ENCODE measurements at regions of chr3 and their contacts with region 1.

Region 1: GRCh38 chr3:126134219-126134975 is 46.0 kb downstream of the ALDH1L1 start:
- DNase-seq: peak; percentile 80
- ATAC-seq: peak; percentile 76
- H3K4me3 Mint-ChIP-seq: 0 out of 2 replicates have a peak overlapping the region, but pooled peaks have one; percentile 22
- H3K27ac Mint-ChIP-seq: peak overlapping the region; percentile 81; the same call in 1 of the 2 replicates
- H3K4me1 Mint-ChIP-seq: peaks cover 22% of the 10 kb centered on the region
- H3K27me3 Mint-ChIP-seq: peaks cover 22% of the 10 kb centered on the region
- CTCF ChIP-seq: peak; percentile 81

Region 2: GRCh38 chr3:125967138-125967537 is 167.3 kb before region 1 on chr3:
- CTCF ChIA-PET with region 1: interaction called, 14 read pairs
- POLR2A ChIA-PET with region 1: no interaction called
- DNase-seq: no peak
- ATAC-seq: no peak
- H3K4me3 Mint-ChIP-seq: no peak overlapping the region
- H3K27ac Mint-ChIP-seq: no peak overlapping the region
- H3K4me1 Mint-ChIP-seq: peaks cover 8% of the 10 kb centered on the region
- H3K27me3 Mint-ChIP-seq: peaks cover 30% of the 10 kb centered on the region
- CTCF ChIP-seq: no peak

Region 3: DNA sequence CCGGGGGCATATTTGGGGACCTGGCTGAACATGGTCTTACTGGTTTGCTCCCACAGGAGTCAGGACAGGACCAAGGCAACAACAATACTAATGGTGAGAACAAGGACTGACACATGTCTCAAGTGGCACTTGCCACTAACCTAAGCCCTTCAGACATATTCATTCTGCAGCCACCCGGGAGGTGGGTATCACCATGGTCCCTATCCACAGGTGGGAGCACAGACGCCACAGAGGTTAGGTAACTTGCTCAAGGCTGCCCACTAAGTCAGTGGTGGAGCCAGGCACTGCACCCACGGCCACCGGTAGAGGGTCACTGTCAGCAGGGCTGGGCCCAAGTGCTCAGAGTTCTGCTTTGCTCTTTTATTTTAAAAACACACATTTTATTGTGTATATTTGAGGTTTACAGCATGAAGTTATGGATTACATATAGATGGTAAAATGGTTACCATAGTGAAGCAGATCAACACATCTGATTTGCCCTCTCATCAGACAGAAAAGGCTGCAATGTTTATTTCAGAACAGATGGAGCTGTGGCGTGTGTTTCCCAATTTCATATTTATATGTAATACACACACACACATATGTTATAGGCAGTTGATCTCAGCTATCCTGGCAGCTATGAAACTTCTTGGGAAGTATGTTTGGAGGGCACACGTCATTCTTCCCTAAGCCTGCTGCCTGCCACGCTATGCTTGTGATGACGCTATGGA is 20.5 kb before region 1 on chr3:
- CTCF ChIA-PET with region 1: interaction called, 10 read pairs
- POLR2A ChIA-PET with region 1: no interaction called
- DNase-seq: peak; percentile 47
- ATAC-seq: peak; percentile 93
- H3K4me3 Mint-ChIP-seq: no peak overlapping the region
- H3K27ac Mint-ChIP-seq: no peak overlapping the region
- H3K4me1 Mint-ChIP-seq: no peaks in the 10 kb centered on the region
- H3K27me3 Mint-ChIP-seq: no peaks in the 10 kb centered on the region
- CTCF ChIP-seq: peak; percentile 50

Region 4: DNA sequence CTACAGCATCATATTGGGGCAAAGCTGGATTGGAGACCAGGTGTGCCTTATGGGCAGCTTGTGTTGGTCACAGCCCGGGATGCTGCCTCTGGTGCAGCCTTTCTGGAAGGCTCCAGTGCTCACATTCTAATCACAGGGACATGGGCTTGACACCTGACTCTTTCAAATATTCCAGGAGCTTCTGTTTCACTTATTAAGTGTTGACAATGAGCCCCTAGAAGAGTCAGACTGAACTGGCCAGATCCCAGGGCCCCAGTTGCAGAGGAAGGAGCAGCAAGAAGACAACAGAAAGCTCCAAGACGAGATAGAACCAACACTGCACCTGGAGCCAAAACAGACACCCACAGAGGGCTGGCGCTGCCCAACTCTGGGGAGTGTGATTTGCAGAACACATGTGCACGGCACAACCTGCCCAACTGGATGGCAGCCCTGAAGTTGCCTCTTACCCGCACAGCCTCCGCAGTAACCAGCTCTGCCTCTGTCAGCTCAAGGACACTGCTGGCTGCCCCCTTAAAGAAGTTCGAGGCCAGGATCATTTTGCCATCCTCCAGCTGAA is 15.6 kb after region 1 on chr3:
- CTCF ChIA-PET with region 1: interaction called, 10 read pairs
- POLR2A ChIA-PET with region 1: no interaction called
- DNase-seq: no peak
- ATAC-seq: no peak
- H3K4me3 Mint-ChIP-seq: no peak overlapping the region
- H3K27ac Mint-ChIP-seq: no peak overlapping the region
- H3K4me1 Mint-ChIP-seq: no peaks in the 10 kb centered on the region
- H3K27me3 Mint-ChIP-seq: no peaks in the 10 kb centered on the region
- CTCF ChIP-seq: no peak

Region 5: GRCh38 chr3:126180477-126181397 is 46.3 kb after region 1 on chr3 and contains the start of gene ALDH1L1:
- CTCF ChIA-PET with region 1: interaction called, 12 read pairs
- POLR2A ChIA-PET with region 1: no interaction called
- DNase-seq: peak; percentile 77
- ATAC-seq: peak; percentile 81
- H3K4me3 Mint-ChIP-seq: peak within 1 kb of the TSS; percentile 78
- H3K27ac Mint-ChIP-seq: no peak within 1 kb of the TSS
- H3K4me1 Mint-ChIP-seq: peaks cover 16% of the 10 kb centered on the region
- H3K27me3 Mint-ChIP-seq: peaks cover 56% of the 10 kb centered on the region
- CTCF ChIP-seq: no peak
- total RNA-seq, gene ALDH1L1: 0.78 to 2.0 TPM (median 1.2 TPM) in 3 replicates

Region 6: GRCh38 chr3:126212602-126213378 is 78.4 kb after region 1 on chr3:
- CTCF ChIA-PET with region 1: interaction called, 43 read pairs
- POLR2A ChIA-PET with region 1: no interaction called
- DNase-seq: peak; percentile 84
- ATAC-seq: peak; percentile 83
- H3K4me3 Mint-ChIP-seq: peak overlapping the region; percentile 84
- H3K27ac Mint-ChIP-seq: peak overlapping the region; percentile 91; the same call in 1 of the 2 replicates
- H3K4me1 Mint-ChIP-seq: peaks cover 21% of the 10 kb centered on the region
- H3K27me3 Mint-ChIP-seq: peaks cover 61% of the 10 kb centered on the region
- CTCF ChIP-seq: no peak

Region 7: GRCh38 chr3:126348308-126348920 is 214.0 kb after region 1 on chr3:
- CTCF ChIA-PET with region 1: interaction called, 16 read pairs
- POLR2A ChIA-PET with region 1: no interaction called
- DNase-seq: peak; percentile 50
- ATAC-seq: peak; percentile 71
- H3K4me3 Mint-ChIP-seq: no peak overlapping the region
- H3K27ac Mint-ChIP-seq: no peak overlapping the region; the same call in 1 of the 2 replicates
- H3K4me1 Mint-ChIP-seq: no peaks in the 10 kb centered on the region
- H3K27me3 Mint-ChIP-seq: no peaks in the 10 kb centered on the region
- CTCF ChIP-seq: no peak